Adrenal gland (tissue), 19 donors: ENCODE measurements at regions of chr1 and their contacts with region 1.

Region 1: DNA sequence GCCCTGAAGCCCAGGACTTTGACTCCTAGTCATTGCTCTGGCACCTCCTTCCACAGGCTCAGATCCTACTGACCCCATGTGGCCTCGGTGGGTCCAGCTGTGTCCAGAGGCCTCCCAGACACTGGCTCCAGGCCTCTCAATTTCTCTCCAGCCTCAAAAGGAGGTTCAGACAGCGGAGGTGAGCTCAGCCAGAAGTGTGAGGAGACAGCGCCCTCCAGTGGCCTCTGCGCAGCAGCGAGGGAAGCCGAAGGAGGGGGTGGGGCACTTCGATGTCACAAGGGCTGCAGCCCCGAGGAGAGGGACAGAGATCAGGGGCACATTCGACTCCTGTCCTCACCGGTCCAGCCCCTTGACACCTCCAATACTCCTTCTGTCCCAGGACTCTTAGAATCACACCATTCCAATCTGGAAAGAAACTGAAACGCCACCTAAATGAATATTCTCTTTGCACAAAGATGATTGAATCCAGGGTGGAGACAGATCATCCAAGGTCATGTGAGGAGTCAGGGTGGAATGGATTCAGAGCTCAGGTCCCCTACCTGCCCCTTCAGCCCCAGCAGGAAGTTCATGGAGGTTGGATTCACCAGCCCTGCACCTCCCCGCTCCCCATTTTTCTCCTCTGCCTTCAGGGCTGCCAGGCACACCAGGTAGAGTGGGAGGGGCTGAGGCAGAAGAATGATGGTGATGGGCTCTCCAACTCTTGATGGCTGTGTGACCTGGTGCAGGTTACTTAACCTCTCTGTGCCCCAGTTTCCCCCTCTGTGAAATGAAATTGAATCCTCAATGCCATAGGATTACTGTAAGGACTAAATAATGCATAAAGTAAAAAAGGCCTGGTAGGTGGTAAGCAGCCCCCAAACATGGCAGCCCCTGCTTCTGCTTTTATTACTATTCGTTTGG is 34.8 kb upstream of the ZBTB40 start:
- DNase-seq: peak; percentile 76 to 91 (median 84)
- H3K4me3 ChIP-seq: no peak overlapping the region
- H3K27ac ChIP-seq: no peak overlapping the region
- H3K4me1 ChIP-seq: peaks cover 0 to 24% of the 10 kb centered on the region in 2 donors
- H3K27me3 ChIP-seq: no peaks in the 10 kb centered on the region
- CTCF ChIP-seq: peak; percentile 91 to 99 (median 96)
- POLR2A ChIP-seq: no peak

Region 2: DNA sequence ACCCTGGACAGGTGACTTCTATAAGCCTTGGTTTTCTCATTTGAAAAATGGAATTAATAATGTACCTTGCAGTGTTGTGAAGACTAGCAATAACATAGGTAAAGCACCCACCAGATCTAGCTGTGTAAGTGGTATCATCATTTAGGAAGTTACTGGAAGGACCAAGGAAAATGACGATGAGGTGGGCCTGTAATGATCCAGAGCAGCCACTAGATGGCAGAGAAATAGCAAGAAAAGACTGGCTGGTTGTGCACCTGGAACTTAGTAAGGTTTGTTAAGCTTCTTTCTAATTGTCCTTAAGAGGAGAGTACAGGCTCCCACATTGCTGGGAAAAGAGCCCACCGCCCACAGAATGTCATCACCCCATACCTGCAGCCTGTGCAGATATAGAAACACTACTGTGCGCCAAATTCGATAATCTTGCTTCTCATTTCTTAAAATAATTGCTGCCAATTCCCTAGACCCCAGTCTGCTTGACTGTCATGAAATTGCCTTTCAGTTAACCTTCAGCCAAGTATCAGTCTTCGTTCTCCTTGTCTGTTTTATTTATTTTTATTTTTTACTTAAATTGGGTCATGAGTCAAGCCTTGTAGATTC is 311.1 kb before region 1 on chr1:
- intact Hi-C with region 1: loop called in 1 of 2 experiments (anchors 5 kb)
- DNase-seq: peak in 2 of 7 donors; percentile 57 to 61
- H3K4me3 ChIP-seq: no peak overlapping the region
- H3K27ac ChIP-seq: no peak overlapping the region
- H3K4me1 ChIP-seq: peaks cover 7 to 32% of the 10 kb centered on the region in 2 donors
- H3K27me3 ChIP-seq: no peaks in the 10 kb centered on the region
- CTCF ChIP-seq: peak; percentile 53 to 90 (median 84)
- POLR2A ChIP-seq: no peak

Region 3: DNA sequence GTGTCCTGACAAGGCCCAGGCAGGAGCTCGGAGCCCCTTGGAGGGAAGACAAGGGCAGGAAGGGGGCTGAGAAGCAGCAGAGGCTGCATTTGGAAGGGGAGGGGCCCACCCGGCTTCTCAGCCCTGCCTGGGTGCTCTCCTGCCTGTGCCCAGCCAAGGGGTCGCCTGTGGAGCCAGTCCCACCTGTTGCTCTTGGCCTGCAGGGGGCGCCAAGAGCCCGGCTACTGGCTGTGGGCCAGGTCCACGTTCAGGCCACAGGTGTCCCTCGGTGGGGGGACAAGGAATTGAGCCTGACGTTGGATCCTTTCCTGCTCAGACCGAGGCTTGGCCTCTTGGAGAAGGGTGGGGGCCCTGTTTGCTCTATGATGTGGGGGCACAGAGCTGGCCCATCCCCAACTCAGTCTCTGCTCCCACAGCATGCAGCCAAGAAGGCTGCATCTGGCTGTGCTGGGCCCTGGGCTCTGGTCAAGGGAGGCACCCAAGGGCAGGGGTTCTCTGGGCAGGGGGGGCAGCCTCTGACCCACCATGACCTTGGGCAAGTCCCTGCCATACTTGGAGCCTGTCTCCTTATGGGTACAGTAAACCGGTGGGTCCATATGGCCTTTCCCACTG is 284.8 kb before region 1 on chr1:
- intact Hi-C with region 1: loop called (anchors 10 kb)
- DNase-seq: peak in 3 of 7 donors; percentile 53 to 62 (median 56)
- H3K4me3 ChIP-seq: no peak overlapping the region
- H3K27ac ChIP-seq: peak overlapping the region in 2 of 5 donors; percentile 35 to 45
- H3K4me1 ChIP-seq: peaks cover 0 to 7% of the 10 kb centered on the region in 2 donors
- H3K27me3 ChIP-seq: no peaks in the 10 kb centered on the region
- CTCF ChIP-seq: peak; percentile 59 to 77 (median 66)
- POLR2A ChIP-seq: no peak

Region 4: DNA sequence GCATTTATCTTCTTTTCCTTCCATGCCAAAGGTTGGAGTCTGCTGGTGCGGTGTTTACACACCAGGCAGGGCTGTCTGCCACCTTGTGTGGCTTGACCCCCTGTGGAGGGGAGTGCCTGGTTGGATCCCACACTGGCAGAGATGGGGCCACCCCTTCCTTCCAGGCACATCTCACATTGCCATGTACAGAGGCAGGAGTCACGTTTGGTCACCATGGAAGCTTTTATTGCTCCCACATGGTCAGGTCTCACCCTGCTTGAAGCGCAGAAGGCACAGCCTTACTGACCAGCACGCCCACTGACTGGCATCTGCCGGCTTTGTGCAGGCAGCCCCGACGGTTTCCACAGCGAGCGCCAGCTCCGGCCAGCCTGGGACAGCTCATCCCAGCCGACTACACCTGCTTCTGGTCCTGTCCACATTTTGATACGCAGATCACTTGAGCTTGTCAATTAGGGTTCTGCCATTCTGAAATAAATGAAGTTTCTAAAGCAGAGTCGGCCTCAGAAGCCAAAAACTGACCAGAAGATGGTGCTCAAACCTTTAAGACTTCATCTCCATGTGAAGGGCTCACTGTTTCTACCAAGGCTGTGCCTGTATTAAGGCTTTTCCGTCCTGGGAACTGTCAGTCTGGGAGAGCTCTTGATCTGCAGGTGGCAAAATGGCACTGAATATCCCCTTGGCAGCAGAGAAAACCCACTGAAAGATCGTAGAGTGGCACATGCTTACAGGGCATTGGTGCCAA is 110.9 kb after region 1 on chr1:
- intact Hi-C with region 1: loop called in 1 of 2 experiments (anchors 10 kb)
- DNase-seq: no peak
- H3K4me3 ChIP-seq: no peak overlapping the region
- H3K27ac ChIP-seq: peak overlapping the region in 1 of 5 donors; percentile 44
- H3K4me1 ChIP-seq: peaks cover 0 to 15% of the 10 kb centered on the region in 2 donors
- H3K27me3 ChIP-seq: no peaks in the 10 kb centered on the region
- CTCF ChIP-seq: peak in 3 of 6 experiments; percentile 13 to 27 (median 26)
- POLR2A ChIP-seq: no peak

Region 5: GRCh38 chr1:22641906-22642636 is 225.3 kb after region 1 on chr1:
- intact Hi-C with region 1: loop called (anchors 2 kb)
- DNase-seq: peak; percentile 77 to 89 (median 86)
- H3K4me3 ChIP-seq: no peak overlapping the region
- H3K27ac ChIP-seq: peak overlapping the region in 1 of 5 donors; percentile 14
- H3K4me1 ChIP-seq: peaks cover 0 to 7% of the 10 kb centered on the region in 2 donors
- H3K27me3 ChIP-seq: no peaks in the 10 kb centered on the region
- CTCF ChIP-seq: peak; percentile 82 to 97 (median 95)
- POLR2A ChIP-seq: no peak